ENCODE measurements at regions of chr19 and their contacts with region 1.

Region 1: DNA sequence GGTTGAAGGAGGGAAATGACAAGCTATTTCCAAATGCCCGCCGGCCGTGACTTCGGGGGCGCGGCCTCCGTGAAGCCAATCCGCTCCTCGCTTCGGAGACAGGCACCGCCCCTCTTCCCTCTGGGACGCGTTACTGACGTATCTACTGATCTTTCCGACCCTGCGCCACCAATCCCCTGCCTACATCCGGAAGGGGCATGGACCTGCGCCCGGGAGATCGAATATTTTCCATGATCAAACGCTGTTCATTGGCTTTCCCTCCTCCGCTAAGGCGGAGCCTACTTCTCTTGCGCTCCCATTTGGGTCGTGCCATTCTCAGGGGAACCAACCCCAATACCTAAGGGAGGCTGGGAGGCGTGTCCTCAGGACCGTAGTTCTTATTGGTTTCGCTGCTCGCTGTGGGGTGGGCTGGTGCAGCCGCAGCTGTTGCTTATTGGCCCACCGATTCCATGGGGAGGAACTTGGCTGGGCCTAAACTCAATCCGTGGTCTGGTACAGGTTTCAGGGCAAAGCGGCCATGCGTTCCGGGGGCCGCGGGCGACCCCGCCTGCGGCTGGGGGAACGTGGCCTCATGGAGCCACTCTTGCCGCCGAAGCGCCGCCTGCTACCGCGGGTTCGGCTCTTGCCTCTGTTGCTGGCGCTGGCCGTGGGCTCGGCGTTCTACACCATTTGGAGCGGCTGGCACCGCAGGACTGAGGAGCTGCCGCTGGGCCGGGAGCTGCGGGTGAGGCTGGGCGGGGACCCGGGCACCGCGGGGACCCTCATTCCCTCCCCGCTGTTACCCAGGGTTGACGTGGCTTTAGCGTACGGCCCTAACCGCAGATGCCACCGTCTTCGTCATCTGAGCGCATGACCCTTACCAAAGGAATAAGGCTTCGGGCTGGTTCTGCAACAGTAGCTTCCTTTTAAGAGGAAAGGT is at the start of gene QPCTL:
- DNase-seq: peak; percentile 96 to 97
- ATAC-seq: peak; percentile 92 to 94
- H3K4me3 ChIP-seq: peak within 1 kb of the TSS; percentile 77 to 97 (median 86)
- H3K27ac ChIP-seq: peak within 1 kb of the TSS; percentile 90 to 96 (median 94)
- H3K4me1 ChIP-seq: peaks cover 8 to 16% of the 10 kb centered on the region in 2 donors
- H3K27me3 ChIP-seq: no peaks in the 10 kb centered on the region
- CTCF ChIP-seq: no peak
- POLR2A ChIP-seq: peak; percentile 72 to 81
- total RNA-seq, gene QPCTL: 0.80 to 1.4 (median 0.97) TPM

Region 2: DNA sequence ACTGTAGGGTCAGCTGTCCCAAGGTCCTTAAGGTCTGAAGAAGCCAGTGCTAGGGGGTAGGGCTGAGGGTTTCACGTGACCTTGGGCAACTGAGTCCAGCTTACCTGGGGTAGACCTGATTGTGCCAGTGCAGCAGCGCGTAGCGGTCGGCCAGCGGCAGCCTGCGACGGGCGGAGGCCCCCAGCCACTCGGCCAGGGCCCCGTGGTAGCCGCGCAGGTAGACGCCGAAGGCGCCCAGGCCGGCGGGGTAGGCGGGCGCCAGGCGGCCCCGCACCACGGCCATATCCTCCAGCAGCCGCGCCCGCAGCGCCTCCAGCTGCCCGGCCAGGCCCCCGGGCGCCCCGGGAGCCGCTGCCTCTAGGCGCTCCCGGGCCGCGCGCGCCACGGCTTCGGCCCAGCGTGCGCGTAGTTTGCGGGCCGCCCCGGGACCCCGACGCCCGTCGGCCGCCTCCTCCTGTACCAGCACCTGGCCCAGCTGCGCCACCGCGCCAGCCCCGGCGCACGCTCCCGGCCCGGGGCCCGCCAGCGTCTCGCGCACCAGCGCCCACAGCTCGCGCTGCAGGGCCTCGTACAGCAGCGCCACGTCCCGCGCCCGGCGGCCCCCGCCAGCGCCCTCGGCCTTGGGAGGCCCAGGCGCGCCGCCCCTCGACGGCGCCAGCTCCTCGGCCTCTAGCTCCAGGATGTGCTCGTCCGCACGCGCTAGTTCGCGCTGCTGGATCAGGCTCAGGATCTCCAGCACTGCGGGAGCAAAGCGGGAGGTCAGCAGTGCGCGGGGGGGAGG is 458.2 kb before region 1 on chr19:
- in situ Hi-C with region 1: no loop called
- intact Hi-C with region 1: no loop called
- DNase-seq: no peak
- ATAC-seq: no peak
- H3K4me3 ChIP-seq: no peak overlapping the region
- H3K27ac ChIP-seq: no peak overlapping the region
- H3K4me1 ChIP-seq: no peaks in the 10 kb centered on the region
- H3K27me3 ChIP-seq: peaks cover 21 to 27% (median 23%) of the 10 kb centered on the region in 3 donors
- CTCF ChIP-seq: no peak
- POLR2A ChIP-seq: no peak

Region 3: DNA sequence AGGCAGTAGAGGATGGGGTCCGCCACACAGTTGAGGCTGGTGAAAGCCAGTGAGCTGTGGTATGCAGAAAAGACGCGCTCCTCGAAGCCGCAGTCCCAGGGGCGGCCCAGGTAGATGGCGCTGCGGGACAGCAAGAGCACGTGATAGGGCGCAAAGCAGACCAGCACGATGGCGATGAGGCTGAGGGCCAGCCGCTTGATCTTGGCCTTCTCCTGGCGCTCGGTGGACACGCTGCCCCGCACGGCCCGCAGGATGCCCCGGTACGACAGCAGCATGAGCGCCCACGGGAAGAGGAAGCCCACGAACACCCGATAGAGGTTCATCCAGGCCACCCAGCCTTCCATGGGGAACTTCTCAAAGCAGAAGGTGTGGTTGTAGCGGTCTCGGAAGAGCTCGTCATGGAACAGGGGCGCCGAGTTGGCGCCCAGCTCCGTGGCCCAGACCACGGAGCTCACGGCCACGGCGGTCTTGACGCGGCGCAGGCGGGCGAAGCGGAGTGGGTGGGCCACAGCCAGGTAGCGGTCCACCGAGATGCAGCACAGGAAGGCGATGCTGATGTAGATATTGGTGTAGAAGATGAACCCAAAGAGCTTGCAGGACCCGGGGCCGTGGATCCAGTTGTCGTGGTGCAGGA is 101.3 kb before region 1 on chr19:
- in situ Hi-C with region 1: no loop called
- intact Hi-C with region 1: no loop called
- DNase-seq: no peak
- ATAC-seq: no peak
- H3K4me3 ChIP-seq: no peak overlapping the region
- H3K27ac ChIP-seq: no peak overlapping the region
- H3K4me1 ChIP-seq: no peaks in the 10 kb centered on the region
- H3K27me3 ChIP-seq: peaks cover 7 to 24% (median 7%) of the 10 kb centered on the region in 3 donors
- CTCF ChIP-seq: no peak
- POLR2A ChIP-seq: no peak

Region 4: GRCh38 chr19:45653634-45654033 is 38.8 kb before region 1 on chr19:
- in situ Hi-C with region 1: no loop called
- intact Hi-C with region 1: no loop called
- DNase-seq: no peak
- ATAC-seq: no peak
- H3K4me3 ChIP-seq: no peak overlapping the region
- H3K27ac ChIP-seq: no peak overlapping the region
- H3K4me1 ChIP-seq: no peaks in the 10 kb centered on the region
- H3K27me3 ChIP-seq: no peaks in the 10 kb centered on the region
- CTCF ChIP-seq: no peak
- POLR2A ChIP-seq: no peak

Region 5: GRCh38 chr19:45681391-45682015 is 10.9 kb before region 1 on chr19:
- in situ Hi-C with region 1: no loop called
- intact Hi-C with region 1: loop called (anchors 1 kb)
- DNase-seq: peak; percentile 57 to 87
- ATAC-seq: peak; percentile 97 to 99
- H3K4me3 ChIP-seq: peak overlapping the region; percentile 50 to 62 (median 54)
- H3K27ac ChIP-seq: peak overlapping the region; percentile 65 to 82 (median 74)
- H3K4me1 ChIP-seq: peaks cover 4 to 16% of the 10 kb centered on the region in 2 donors
- H3K27me3 ChIP-seq: peaks cover 25 to 29% (median 27%) of the 10 kb centered on the region in 3 donors
- CTCF ChIP-seq: peak; percentile 94 to 99 (median 96)
- POLR2A ChIP-seq: no peak

Region 6: DNA sequence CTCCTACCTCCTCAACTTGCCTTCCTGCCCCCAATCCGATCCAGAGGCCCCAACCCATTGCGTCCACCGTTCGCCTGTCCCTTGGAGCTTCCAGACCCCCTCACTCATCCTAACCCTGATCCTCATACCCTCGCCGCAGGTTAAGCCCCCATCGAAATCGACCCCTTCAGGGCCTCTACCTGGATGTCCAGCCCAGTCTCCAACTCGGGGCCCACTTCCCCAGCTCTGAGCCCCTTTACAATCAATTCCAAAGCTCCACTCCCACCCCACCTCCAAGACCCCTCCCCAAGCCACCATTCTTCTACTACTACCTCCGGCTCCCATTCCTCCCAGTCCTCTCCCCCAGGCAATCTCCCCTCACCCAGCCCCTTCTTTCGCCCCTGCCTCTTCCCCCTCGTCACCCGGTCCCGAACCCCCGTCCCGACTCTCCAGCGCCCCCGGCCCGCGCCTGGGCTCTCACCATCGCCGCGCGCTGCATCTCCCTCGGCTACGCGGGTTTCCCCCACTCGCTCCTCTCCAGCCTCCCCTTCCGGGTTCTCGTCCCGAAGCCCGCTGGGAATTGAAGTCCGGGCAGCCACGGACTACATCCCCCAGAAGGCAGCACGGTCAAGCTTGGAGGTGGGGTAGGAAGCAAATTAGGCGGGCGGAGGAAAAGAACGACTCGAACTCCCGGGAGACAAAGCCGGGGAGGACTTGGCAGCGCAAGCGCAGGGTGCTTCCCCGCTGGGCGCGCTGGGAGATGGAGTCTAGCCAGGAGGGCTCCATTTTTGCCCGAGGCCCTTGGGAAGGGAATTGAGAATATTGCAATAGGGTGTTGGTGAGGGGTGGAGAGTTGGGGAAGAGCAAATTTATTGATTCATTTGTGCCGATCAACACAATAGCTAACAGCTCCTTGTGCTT is 38.2 kb after region 1 on chr19 and contains the start of gene FBXO46:
- in situ Hi-C with region 1: no loop called
- intact Hi-C with region 1: loop called (anchors 1 kb)
- DNase-seq: peak; percentile 95 to 97
- ATAC-seq: peak; percentile 99 to 100
- H3K4me3 ChIP-seq: peak within 1 kb of the TSS; percentile 85 to 98 (median 92)
- H3K27ac ChIP-seq: peak within 1 kb of the TSS; percentile 83 to 90 (median 87)
- H3K4me1 ChIP-seq: peaks cover 9 to 10% of the 10 kb centered on the region in 2 donors
- H3K27me3 ChIP-seq: no peaks in the 10 kb centered on the region
- CTCF ChIP-seq: no peak
- POLR2A ChIP-seq: peak; percentile 52 to 82
- total RNA-seq, gene FBXO46: 6.6 to 14.3 (median 8.7) TPM

Measured in gastrocnemius medialis (tissue), 4 donors.